PC-9 (cell line): ENCODE measurements at regions of chr3 and their contacts with region 1.

Region 1: DNA sequence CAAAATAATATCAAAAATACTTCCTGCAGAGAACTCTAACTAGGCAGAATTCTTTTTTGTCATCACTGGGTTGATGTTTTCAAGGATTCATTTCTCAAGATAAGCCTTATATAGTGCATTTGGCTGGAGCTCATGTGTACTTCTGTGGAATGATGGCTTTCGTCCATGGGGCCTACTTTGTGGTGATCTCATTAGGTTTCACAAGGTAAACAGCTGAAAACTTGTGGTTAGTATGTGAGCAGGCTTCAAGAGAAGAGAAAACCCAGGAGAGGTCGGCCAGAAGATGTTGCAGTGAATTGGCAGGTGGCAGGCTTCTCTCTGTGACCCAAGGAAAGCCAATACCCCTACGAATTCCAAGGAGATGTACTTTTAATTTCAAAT is 121.4 kb upstream of the PHLDB2 start:
- DNase-seq: peak; percentile 51 to 77
- H3K4me3 ChIP-seq: no peak overlapping the region
- H3K27ac ChIP-seq: peak overlapping the region; percentile 91
- H3K4me1 ChIP-seq: peaks cover 73% of the 10 kb centered on the region
- H3K27me3 ChIP-seq: no peaks in the 10 kb centered on the region
- CTCF ChIP-seq: no peak

Region 2: DNA sequence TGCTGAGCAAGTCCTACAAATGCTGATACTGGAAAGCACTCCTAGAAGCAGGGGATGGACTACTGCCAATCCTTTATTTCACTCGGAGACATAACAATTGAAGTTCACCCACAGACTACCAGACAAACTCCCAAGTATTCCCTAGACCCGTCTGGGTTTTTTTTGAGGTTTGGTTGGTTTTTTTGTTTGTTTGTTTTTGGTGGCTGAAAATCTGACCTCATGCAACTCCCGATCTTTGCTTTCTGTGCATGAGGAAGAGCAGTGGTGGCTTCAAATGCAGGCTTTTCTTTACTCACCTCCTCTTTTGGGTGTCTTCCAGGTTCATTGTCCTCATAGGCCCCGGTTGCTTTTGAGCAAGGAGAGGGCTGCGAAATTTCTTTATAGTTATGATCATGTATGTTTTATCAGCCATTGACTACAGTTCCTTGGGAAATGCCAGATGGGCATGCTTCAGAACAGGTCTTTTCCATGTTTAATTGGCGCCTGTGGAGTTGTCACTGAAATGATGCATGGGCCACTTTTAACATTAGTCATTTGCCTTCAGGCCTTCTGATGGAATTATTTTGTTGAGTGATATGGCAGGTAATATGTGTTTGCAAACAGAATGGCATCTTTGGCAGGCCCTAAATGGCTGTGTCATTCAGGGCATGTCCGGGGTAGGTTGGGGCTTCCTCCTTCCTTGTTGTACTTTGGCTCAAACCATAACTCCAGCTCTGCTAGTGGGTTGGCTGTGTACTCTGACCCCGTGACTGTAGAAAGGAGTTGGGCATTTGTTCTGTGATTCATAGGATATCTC is 61.3 kb before region 1 on chr3:
- CTCF ChIA-PET with region 1: interaction called, 6 read pairs
- POLR2A ChIA-PET with region 1: no interaction called
- intact Hi-C with region 1: loop called (anchors 1 kb)
- DNase-seq: peak; percentile 92 to 100
- H3K4me3 ChIP-seq: peak overlapping the region; percentile 62
- H3K27ac ChIP-seq: peak overlapping the region; percentile 83
- H3K4me1 ChIP-seq: peaks cover 44% of the 10 kb centered on the region
- H3K27me3 ChIP-seq: no peaks in the 10 kb centered on the region
- CTCF ChIP-seq: no peak

Region 3: GRCh38 chr3:111803123-111803593 is 65.5 kb after region 1 on chr3:
- CTCF ChIA-PET with region 1: interaction called, 3 read pairs
- POLR2A ChIA-PET with region 1: interaction called, 10 read pairs
- intact Hi-C with region 1: loop called (anchors 1 kb)
- DNase-seq: peak; percentile 89 to 98
- H3K4me3 ChIP-seq: no peak overlapping the region
- H3K27ac ChIP-seq: peak overlapping the region; percentile 95
- H3K4me1 ChIP-seq: peaks cover 43% of the 10 kb centered on the region
- H3K27me3 ChIP-seq: no peaks in the 10 kb centered on the region
- CTCF ChIP-seq: no peak

Region 4: GRCh38 chr3:111851511-111851954 is 113.8 kb after region 1 on chr3:
- CTCF ChIA-PET with region 1: no interaction called
- POLR2A ChIA-PET with region 1: interaction called, 5 read pairs
- intact Hi-C with region 1: loop called (anchors 1 kb)
- DNase-seq: peak; percentile 63 to 98
- H3K4me3 ChIP-seq: no peak overlapping the region
- H3K27ac ChIP-seq: peak overlapping the region; percentile 83
- H3K4me1 ChIP-seq: peaks cover 58% of the 10 kb centered on the region
- H3K27me3 ChIP-seq: no peaks in the 10 kb centered on the region
- CTCF ChIP-seq: no peak

Region 5: GRCh38 chr3:111917300-111917699 is 179.6 kb after region 1 on chr3:
- CTCF ChIA-PET with region 1: no interaction called
- POLR2A ChIA-PET with region 1: interaction called, 11 read pairs
- intact Hi-C with region 1: loop called (anchors 5 kb)
- DNase-seq: peak; percentile 30 to 92
- H3K4me3 ChIP-seq: no peak overlapping the region
- H3K27ac ChIP-seq: peak overlapping the region; percentile 88
- H3K4me1 ChIP-seq: peaks cover 35% of the 10 kb centered on the region
- H3K27me3 ChIP-seq: no peaks in the 10 kb centered on the region
- CTCF ChIP-seq: no peak

Region 6: DNA sequence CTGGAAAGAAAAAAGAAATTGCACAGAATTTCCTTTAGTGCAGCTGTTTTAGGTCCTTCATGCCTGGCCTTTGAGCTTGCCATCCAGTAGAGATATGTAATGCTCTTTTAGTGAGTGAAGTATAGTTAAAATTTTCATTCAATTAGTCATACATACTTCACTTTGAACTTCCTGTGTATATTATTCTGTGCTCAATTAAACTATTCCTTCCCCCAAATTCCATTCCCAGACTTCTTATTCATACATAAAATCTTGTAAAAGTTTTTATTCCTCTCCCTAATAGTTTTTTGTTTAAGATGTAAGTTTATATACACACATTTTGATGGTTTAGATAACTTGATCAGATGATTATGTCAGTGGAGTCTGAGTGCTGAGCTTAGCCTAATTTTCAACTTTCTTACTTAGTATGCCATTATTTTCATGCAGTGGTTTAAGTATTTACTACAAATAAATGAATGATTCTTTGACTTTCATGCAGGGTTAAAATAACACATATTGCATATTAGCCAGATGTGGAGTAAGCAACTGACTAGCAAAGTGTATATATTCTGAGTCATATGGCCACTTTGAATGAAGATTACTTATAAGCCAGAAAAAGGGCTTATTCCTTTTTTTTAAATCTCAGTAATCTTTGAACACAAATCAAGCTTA is 198.6 kb after region 1 on chr3:
- CTCF ChIA-PET with region 1: no interaction called
- POLR2A ChIA-PET with region 1: interaction called, 3 read pairs
- intact Hi-C with region 1: loop called (anchors 2 kb)
- DNase-seq: peak in 1 of 2 experiments; percentile 94
- H3K4me3 ChIP-seq: peak overlapping the region; percentile 2
- H3K27ac ChIP-seq: peak overlapping the region; percentile 90
- H3K4me1 ChIP-seq: peaks cover 45% of the 10 kb centered on the region
- H3K27me3 ChIP-seq: no peaks in the 10 kb centered on the region
- CTCF ChIP-seq: no peak

Region 7: DNA sequence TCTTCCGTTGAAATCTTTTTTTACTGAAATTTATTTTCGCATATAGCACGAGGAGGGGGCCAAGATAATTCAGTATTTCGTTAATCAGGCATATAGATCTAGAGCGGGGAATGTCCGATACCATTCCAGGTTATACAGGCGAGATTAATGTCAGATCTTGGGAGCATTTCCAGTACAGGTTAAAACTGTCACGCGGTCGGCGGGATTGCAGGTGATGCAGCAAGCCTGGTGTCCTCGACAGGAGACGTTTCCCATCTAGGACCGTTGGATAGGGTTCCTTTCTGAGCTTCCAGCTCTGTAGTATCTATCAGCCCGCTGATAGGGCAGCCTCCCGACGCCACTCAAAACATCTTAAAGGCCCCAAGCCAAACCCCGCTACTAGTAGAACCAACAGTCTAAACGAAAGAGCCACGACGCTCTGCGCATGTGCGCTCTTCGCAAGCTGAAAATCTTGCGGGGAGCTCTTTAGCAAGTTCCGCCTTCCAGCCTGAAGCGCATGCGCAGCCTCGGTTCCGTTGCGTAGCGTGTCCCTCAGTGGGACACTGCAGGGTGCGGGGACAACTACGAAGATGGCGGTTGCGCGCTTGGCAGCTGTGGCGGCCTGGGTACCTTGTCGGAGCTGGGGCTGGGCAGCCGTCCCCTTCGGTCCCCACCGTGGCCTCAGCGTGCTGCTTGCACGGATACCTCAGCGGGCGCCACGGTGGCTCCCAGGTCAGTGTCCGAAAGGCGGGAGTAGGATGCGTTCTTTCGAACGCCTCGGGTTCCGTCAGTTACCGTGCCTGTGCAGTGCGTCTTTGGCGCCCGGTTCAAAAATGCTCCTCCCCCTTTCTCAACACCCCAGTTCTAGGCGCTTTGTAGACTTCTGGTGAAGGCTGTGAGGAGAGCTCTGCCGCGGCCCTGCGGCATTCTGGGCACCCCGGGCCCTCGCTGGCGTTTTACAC is 241.1 kb after region 1 on chr3 and contains the start of gene ABHD10:
- CTCF ChIA-PET with region 1: no interaction called
- POLR2A ChIA-PET with region 1: interaction called, 22 read pairs
- intact Hi-C with region 1: no loop called
- DNase-seq: peak; percentile 95 to 96
- H3K4me3 ChIP-seq: peak within 1 kb of the TSS; percentile 80
- H3K27ac ChIP-seq: peak within 1 kb of the TSS; percentile 62
- H3K4me1 ChIP-seq: peaks cover 30% of the 10 kb centered on the region
- H3K27me3 ChIP-seq: no peaks in the 10 kb centered on the region
- CTCF ChIP-seq: no peak
- total RNA-seq, gene ABHD10: 57.4 and 57.6 TPM in 2 replicates